Heart left ventricle (tissue), 16 donors: ENCODE measurements at regions of chr2 and their contacts with region 1.

Region 1: DNA sequence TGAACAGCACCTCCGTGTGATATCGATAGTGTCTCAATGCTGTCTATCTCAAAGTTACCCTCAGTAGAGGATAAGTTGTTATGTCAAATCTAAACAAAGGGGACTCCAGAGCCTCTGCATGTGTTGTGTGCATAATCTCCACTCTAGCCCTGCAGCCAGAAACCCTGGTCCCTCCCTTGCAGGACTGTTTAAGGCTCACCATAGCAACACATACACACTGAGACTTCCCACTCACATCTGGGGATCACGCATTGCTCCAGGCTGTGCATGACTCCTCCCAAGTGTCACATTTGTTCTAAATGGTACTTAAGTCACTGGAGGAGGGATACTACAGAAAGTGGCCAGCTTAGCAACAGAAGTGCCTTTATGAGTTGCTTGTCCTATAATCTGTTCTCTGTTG is 258.6 kb upstream of the CRIM1 start:
- DNase-seq: no peak
- ATAC-seq: no peak
- H3K4me3 ChIP-seq: no peak overlapping the region
- H3K27ac ChIP-seq: no peak overlapping the region
- H3K4me1 ChIP-seq: no peaks in the 10 kb centered on the region
- H3K27me3 ChIP-seq: no peaks in the 10 kb centered on the region
- CTCF ChIP-seq: no peak
- POLR2A ChIP-seq: no peak

Region 2: GRCh38 chr2:36031476-36031875 is 65.5 kb before region 1 on chr2:
- intact Hi-C with region 1: no loop called
- DNase-seq: no peak
- ATAC-seq: no peak
- H3K4me3 ChIP-seq: no peak overlapping the region
- H3K27ac ChIP-seq: no peak overlapping the region
- H3K4me1 ChIP-seq: no peaks in the 10 kb centered on the region
- H3K27me3 ChIP-seq: no peaks in the 10 kb centered on the region
- CTCF ChIP-seq: no peak
- POLR2A ChIP-seq: no peak

Region 3: DNA sequence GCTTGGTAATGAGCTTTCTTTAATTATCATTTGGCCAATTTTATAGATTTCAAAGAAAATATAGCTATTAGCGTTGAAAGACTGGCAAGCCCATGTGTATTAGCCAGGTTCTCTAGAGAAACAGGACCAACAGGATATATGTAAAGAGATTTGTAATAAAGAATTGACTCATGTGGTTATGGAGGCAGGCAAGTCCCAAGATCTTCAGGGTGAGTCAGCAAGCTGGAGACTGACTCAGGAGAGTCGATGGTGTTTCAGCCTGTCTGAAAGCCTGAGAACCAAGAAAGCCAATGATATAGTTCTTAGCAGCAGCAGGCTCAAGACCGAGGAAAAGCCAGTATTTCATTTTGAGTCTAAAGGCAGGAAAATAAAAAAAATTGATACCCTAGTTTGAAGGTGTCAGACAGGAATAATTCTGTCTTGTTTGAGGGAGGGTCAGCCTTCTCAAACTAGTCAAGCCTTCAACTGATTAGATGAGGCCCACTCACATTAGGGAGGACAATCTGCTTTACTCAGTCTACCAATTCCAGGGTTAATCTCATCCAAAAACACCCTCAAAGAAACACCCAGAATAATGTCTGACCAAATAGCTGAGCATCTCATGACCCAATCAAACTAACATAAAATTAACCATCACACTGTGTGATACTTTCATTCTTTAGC is 180.3 kb after region 1 on chr2:
- intact Hi-C with region 1: loop called in 1 of 10 experiments (anchors 10 kb)
- DNase-seq: no peak
- ATAC-seq: no peak
- H3K4me3 ChIP-seq: no peak overlapping the region
- H3K27ac ChIP-seq: no peak overlapping the region
- H3K4me1 ChIP-seq: no peaks in the 10 kb centered on the region
- H3K27me3 ChIP-seq: peaks cover 0 to 4% (median 0%) of the 10 kb centered on the region in 9 donors
- CTCF ChIP-seq: no peak
- POLR2A ChIP-seq: no peak